ENCODE measurements at regions of chr3 and their contacts with region 1.

Region 1: GRCh38 chr3:190566043-190566933 is 52.4 kb downstream of the IL1RAP start:
- DNase-seq: peak; percentile 67
- H3K4me3 Mint-ChIP-seq: peak overlapping the region; percentile 42
- H3K27ac Mint-ChIP-seq: peak overlapping the region; percentile 97
- H3K4me1 Mint-ChIP-seq: peaks cover 83% of the 10 kb centered on the region
- H3K27me3 Mint-ChIP-seq: no peaks in the 10 kb centered on the region

Region 2: GRCh38 chr3:189530822-189531221 is 1035.5 kb before region 1 on chr3:
- intact Hi-C with region 1: loop called (anchors 10 kb)
- DNase-seq: no peak
- H3K4me3 Mint-ChIP-seq: no peak overlapping the region
- H3K27ac Mint-ChIP-seq: peak overlapping the region; percentile 61
- H3K4me1 Mint-ChIP-seq: peaks cover 24% of the 10 kb centered on the region
- H3K27me3 Mint-ChIP-seq: no peaks in the 10 kb centered on the region

Region 3: DNA sequence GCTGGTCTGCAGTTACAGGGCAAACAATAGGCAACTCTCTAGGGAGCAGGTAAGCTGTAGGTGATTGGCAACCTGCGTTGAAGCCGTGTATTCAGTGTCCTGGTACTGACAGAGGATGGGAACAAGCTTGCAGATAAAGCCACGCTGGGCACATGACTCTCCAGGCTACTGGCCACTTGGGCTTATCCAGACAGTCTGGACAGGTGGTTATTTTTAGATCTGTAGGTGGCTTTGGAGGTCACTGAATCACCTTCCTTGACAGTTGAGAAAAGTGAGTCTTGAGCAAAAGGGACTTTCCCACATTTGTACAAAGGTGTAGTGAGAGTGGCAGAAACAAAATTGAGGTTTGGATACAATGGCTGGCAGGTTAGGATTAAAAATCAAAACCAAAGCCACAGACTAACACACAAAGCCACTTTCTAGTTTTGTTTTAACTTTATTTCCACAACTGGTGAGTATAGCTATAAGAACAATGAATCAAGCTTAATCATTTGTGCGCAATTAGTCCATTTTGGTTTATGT is 74.7 kb before region 1 on chr3:
- intact Hi-C with region 1: loop called (anchors 1 kb)
- DNase-seq: no peak
- H3K4me3 Mint-ChIP-seq: no peak overlapping the region
- H3K27ac Mint-ChIP-seq: peak overlapping the region; percentile 7
- H3K4me1 Mint-ChIP-seq: peaks cover 27% of the 10 kb centered on the region
- H3K27me3 Mint-ChIP-seq: peaks cover 67% of the 10 kb centered on the region

Region 4: GRCh38 chr3:190534986-190535385 is 31.3 kb before region 1 on chr3:
- intact Hi-C with region 1: loop called (anchors 2 kb)
- DNase-seq: no peak
- H3K4me3 Mint-ChIP-seq: no peak overlapping the region
- H3K27ac Mint-ChIP-seq: no peak overlapping the region
- H3K4me1 Mint-ChIP-seq: peaks cover 59% of the 10 kb centered on the region
- H3K27me3 Mint-ChIP-seq: no peaks in the 10 kb centered on the region

Region 5: GRCh38 chr3:190617185-190617584 is 50.9 kb after region 1 on chr3:
- intact Hi-C with region 1: loop called (anchors 1 kb)
- DNase-seq: peak; percentile 58
- H3K4me3 Mint-ChIP-seq: peak overlapping the region; percentile 61
- H3K27ac Mint-ChIP-seq: peak overlapping the region; percentile 97
- H3K4me1 Mint-ChIP-seq: peaks cover 91% of the 10 kb centered on the region
- H3K27me3 Mint-ChIP-seq: no peaks in the 10 kb centered on the region

Measured in activated T-helper 1 cell treated with anti-CD3 and anti-CD28 coated beads, Interleukin-12 subunit alpha, Interleukin-12 subunit beta, Interleukin-2, Interleukin-4 antibody, amounts not matched to agents 30 ng/mL and 10 ng/mL and 1 ng/mL, durations not matched to agents 14 hours and 24 hours and 36 hours (primary cell).